ENCODE measurements at regions of chr4 and their contacts with region 1.

Region 1: DNA sequence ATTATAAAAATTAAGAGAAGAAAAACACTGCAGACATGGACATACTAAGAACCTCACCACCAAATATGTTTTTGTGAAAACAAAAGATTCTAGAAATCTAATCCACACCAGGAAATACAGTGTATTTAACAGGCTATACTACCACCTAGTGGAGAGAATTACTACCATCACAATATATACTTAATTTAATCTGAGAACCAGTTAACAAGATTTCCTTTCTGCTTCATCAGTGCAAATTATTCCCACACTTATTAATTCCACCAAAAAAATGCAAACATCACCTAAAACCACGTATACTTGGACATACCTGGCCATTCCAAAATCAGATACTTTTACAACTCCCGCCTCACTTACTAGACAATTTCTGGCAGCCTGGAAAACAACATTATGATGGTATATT is 7.0 kb upstream of the TXK start:
- DNase-seq: no peak
- H3K4me3 Mint-ChIP-seq: no peak overlapping the region
- H3K27ac Mint-ChIP-seq: no peak overlapping the region
- H3K4me1 Mint-ChIP-seq: peaks cover 52% of the 10 kb centered on the region
- H3K27me3 Mint-ChIP-seq: no peaks in the 10 kb centered on the region

Region 2: GRCh38 chr4:48127682-48128394 is 13.2 kb before region 1 on chr4:
- CTCF ChIA-PET with region 1: interaction called, 143 read pairs
- DNase-seq: peak; percentile 90
- H3K4me3 Mint-ChIP-seq: peak overlapping the region; percentile 94
- H3K27ac Mint-ChIP-seq: peak overlapping the region; percentile 99
- H3K4me1 Mint-ChIP-seq: peaks cover 85% of the 10 kb centered on the region
- H3K27me3 Mint-ChIP-seq: no peaks in the 10 kb centered on the region

Measured in activated naive CD4-positive, alpha-beta T cell treated with anti-CD3 and anti-CD28 coated beads, Interleukin-2, amount 10 ng/mL, durations not matched to agents 7 days and 5 days (primary cell).